Posterior vena cava (tissue), 2 donors: ENCODE measurements at regions of chr4 and their contacts with region 1.

Region 1: GRCh38 chr4:87006676-87007527 is 72.1 kb downstream of the AFF1 start:
- DNase-seq: peak; percentile 97

Region 2: DNA sequence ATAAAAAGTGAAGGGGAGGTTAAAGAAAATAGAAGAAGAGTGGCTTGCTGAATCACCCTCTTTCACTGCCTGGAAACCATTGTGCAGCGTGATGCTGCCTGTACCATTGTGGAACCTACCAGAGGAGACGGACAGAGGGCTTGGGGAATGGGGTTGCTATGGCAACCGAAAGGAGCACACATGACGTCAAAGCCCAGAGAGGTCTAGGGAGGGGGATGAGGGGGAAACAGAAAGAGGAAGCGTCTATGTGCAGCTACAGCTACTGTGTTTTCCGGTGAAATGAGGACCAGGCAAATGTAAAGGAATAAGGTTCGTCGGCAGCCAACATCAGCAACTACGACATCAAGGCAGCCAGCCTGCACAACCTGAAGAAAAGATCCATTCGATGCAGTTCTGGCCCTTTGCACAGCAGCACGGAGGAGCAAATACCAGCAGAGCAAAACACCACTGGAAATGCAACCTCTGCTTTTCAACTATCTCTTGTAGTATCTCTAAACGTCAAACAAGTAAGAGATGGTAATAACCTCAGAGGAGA is 646.9 kb before region 1 on chr4 and contains the start of gene MAPK10:
- intact Hi-C with region 1: no loop called
- DNase-seq: peak; percentile 84
- total RNA-seq, gene MAPK10: 13.6 to 30.5 TPM

Region 3: GRCh38 chr4:86934771-86935565 is 71.9 kb before region 1 on chr4 and contains the start of gene AFF1:
- intact Hi-C with region 1: loop called (anchors 2 to 5 kb)
- DNase-seq: peak; percentile 98
- total RNA-seq, gene AFF1: 89.5 to 97.5 TPM

Region 4: DNA sequence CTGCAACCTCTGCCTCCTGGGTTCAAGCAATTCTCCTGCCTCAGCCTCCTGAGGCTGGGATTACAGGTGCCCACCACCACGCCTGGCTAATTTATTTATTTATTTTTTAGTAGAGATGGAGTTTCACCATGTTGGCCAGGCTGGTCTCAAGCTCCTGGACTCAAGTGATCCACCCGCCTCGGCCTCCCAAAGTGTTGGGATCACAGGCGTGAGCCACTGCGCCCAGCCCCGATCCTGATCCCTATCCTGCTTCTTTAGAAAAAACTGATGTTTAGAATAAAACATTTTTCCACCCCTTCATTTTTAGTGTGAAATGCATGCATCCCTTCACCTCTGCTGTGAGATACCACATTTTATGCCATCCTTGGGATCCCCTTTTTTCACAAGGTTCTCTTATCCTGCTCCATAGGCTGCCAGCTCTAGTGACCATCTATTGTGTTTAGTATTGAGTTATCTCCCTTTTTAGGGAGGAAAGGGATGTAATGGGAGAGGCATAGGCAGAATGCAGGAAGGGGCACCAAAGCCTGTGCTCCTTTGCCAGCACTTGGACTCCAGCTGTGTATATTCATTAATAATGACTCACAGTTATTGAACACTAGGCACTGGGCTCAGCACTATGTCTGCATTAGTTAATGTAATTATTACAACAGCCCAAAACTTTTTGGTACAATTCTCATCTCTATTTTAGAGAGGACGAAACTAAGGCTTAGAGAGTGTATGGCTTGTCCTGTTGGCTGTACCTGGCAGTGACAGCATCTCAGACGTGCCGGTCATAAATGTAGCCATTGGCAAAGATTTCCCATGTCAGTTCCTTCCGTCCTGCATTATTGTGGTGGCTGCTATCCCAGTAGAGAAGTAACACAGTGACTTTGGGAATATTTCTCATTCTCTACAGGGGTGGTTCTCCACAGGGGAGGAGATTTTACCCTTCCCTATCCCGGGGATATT is 18.0 kb after region 1 on chr4:
- intact Hi-C with region 1: loop called in 1 of 2 experiments (anchors 1 kb)
- DNase-seq: no peak

Region 5: GRCh38 chr4:87044511-87045233 is 37.8 kb after region 1 on chr4:
- intact Hi-C with region 1: loop called in 1 of 2 experiments (anchors 5 kb)
- DNase-seq: no peak

Region 6: DNA sequence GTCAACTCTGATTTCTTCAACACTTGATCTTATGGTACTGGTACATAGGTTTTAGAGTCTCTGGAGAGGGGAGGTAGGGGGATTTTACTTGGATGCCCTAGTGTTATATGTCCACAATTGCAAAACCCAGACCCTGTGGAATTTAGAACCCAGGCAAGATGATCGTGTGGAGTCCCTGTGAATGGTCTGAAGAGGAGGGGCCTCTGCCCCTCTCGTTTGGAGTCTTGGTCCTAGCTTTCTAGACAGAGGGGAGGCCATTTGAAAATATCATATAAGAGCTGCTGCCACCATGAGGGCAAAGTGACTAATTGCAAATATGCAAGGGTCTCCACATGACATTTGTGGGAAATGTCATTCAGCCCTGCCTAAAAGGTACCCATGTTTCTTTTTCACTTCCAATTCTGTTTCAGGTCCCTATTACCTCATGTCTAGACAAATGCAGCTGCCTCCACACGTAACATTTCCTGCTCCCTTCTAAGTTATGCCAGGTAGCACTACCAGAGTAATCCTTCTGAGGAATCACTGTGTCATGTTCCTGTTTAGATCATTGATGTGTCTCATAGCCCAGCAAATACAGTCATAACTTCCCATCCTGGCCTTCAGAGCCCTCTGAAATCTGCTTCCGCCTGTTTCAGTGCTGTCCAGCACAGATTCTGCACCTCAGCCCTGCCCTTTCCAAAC is 86.7 kb after region 1 on chr4:
- intact Hi-C with region 1: loop called in 1 of 2 experiments (anchors 2 kb)
- DNase-seq: no peak